Right ventricle myocardium inferior (tissue), 1 donor: ENCODE measurements at regions of chr9 and their contacts with region 1.

Region 1: DNA sequence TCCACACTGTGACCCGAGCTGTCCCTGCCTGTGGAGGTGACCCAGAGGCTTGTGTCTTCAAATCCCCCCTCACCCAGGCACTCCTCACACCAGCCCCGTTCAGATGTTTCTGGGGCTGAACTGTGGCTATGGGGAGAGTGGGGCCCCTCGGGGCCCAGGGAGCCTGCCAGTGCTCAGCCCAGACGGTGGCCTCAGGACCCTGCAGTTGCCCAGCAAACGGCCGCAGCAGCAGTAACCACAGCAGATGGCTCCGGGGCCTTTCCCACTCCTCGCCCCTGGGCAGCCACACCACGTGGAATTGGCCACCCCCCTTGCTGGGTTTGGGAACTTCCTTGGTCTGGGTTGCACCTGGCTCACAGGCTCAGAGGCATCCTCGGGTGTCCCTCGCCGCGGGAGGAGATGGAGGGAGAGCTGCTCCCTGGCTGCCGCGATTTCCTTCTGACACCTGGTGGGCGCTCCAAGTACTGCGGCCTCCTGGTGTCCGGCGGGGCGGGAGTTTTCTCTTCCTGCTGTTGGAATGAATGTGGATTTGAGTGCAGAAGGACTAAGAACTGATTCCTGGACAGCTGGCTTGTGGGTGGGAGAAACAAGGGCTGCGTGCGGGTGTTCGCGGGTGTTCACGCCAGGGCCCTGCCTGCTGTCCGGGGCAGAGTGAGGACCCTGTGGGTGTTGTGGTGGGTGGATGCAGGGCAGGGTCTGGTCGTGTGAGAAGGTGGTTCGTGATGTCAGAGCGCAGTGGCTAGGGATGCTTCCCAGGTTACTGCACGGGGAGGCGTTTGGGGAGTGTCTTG is 97.5 kb downstream of the COL5A1 start:
- DNase-seq: no peak
- ATAC-seq: peak; percentile 36

Region 2: GRCh38 chr9:134178768-134179551 is 560.1 kb before region 1 on chr9:
- intact Hi-C with region 1: loop called (anchors 10 kb)
- DNase-seq: peak; percentile 85
- ATAC-seq: peak; percentile 65

Region 3: GRCh38 chr9:134449221-134449894 is 289.7 kb before region 1 on chr9:
- intact Hi-C with region 1: loop called (anchors 1 kb)
- DNase-seq: peak; percentile 94
- ATAC-seq: peak; percentile 97